ENCODE measurements at regions of chr15 and their contacts with region 1.

Region 1: DNA sequence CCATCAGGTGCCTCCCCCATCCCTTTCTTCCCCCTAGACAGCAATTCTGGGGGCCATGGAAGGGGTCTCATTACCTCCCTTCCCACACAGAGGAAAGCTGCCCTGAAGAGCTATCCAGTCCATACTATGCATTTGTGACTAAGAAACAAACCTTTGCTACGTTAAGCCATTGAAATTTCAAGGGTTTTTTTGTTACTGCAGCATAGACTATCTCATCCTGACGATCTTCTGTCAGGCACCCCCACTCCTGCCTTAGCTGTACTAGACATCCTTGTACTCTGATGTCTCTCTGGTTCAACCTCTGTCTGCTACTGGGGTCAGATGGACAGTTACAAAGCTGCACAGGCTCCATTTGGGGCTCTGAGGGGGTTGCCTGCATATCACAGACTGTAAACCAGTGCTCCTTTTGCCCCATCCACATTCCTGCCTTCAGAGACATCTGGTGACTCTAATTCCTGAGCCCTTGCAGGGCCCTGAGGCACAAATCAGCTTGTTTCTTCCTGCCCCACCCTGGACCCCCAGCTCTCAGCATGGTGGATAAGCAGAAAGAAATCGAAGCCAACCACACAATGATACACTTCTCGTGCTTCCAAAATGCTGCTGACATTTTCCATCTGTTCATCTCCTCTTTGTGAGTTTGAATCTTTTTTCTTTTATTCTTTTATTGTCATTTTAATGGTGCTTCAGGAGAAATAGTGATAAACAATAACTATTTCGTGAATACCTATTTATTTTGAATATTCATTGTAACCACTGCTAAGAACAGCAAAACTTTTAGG is 21.6 kb upstream of the NSMCE3 start:
- DNase-seq: no peak
- ATAC-seq: no peak
- H3K4me3 ChIP-seq: no peak overlapping the region
- H3K4me3 Mint-ChIP-seq: no peak overlapping the region
- H3K27ac ChIP-seq: no peak overlapping the region
- H3K27ac Mint-ChIP-seq: no peak overlapping the region
- H3K4me1 ChIP-seq: no peaks in the 10 kb centered on the region
- H3K4me1 Mint-ChIP-seq: no peaks in the 10 kb centered on the region
- H3K27me3 ChIP-seq: no peaks in the 10 kb centered on the region
- H3K27me3 Mint-ChIP-seq: peaks cover 21 to 39% of the 10 kb centered on the region in 2 donors
- CTCF ChIP-seq: no peak

Region 2: GRCh38 chr15:29242456-29243242 is 48.6 kb before region 1 on chr15:
- intact Hi-C with region 1: loop called (anchors 5 kb)
- DNase-seq: no peak
- ATAC-seq: no peak
- H3K4me3 ChIP-seq: no peak overlapping the region
- H3K4me3 Mint-ChIP-seq: no peak overlapping the region
- H3K27ac ChIP-seq: no peak overlapping the region
- H3K27ac Mint-ChIP-seq: no peak overlapping the region
- H3K4me1 ChIP-seq: no peaks in the 10 kb centered on the region
- H3K4me1 Mint-ChIP-seq: no peaks in the 10 kb centered on the region
- H3K27me3 ChIP-seq: peaks cover 4% of the 10 kb centered on the region
- H3K27me3 Mint-ChIP-seq: peaks cover 14 to 27% of the 10 kb centered on the region in 2 donors
- CTCF ChIP-seq: no peak

Region 3: DNA sequence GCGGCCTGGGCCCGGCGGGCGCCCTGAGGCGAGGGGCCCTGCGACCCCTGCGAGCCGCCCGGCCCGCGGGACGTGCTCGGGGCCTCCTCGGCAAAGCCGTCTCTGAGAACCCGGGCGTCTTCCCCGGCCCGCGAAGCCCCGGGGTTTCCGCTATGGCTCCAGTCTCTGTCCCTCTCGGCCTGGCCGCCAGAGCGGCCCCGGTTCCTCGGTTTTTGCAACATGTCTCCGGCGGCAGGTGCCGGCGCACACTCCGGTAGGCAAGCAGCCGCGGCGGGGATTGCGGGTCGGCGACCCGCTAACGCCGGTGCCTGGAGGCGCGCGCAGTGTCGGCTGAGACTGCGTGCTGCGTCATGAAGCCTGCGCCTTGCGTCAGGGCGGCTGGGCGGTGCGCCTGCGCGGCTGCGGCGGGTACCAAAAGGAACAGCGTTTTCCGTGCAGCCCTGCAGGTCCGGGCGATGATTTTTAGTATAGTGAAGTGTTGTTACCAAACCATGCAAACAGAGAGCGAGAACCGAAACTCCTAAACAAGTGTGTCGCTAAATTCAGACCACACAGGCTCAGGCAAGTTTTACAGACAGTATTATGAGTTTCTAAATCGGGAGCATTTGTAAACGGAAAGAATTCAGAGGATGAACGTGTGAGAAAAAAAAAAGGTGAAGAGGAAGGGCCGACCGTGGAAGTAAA is 21.6 kb before region 1 on chr15 and contains the start of gene NSMCE3:
- intact Hi-C with region 1: no loop called
- DNase-seq: peak; percentile 91 to 96
- ATAC-seq: peak; percentile 87 to 94 (median 91)
- H3K4me3 ChIP-seq: peak within 1 kb of the TSS; percentile 72
- H3K4me3 Mint-ChIP-seq: peak within 1 kb of the TSS; percentile 97
- H3K27ac ChIP-seq: peak within 1 kb of the TSS; percentile 98
- H3K27ac Mint-ChIP-seq: peak within 1 kb of the TSS; percentile 94 to 95
- H3K4me1 ChIP-seq: peaks cover 9% of the 10 kb centered on the region
- H3K4me1 Mint-ChIP-seq: peaks cover 50 to 51% of the 10 kb centered on the region in 2 donors
- H3K27me3 ChIP-seq: no peaks in the 10 kb centered on the region
- H3K27me3 Mint-ChIP-seq: peaks cover 0 to 2% of the 10 kb centered on the region in 2 donors
- CTCF ChIP-seq: no peak
- total RNA-seq, gene NSMCE3: 20.6 to 28.0 (median 22.0) TPM

Measured in natural killer cell (primary cell).